A673 (cell line): ENCODE measurements at regions of chr11 and their contacts with region 1.

Region 1: DNA sequence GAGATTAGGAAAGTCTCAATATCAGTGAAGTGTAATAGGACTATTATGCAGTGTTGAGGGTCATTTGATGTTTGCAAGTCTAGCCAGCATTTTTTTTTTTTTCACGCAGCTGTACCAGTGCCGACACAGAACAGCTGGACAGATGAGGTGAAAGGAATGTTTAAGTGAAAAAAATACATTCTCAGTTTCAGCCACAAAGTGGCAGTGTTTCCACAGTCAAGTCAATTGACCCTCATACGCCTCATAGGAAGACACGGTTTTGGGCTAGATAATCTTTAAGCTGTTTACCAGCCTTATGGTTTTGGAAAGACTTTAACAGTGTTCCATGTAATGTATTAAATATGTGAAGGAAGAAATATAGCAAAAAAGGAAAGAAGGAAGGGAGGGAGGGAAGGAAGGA is 349.9 kb upstream of the ANO3 start:
- DNase-seq: peak; percentile 56
- H3K4me3 ChIP-seq: no peak overlapping the region
- H3K27ac ChIP-seq: no peak overlapping the region
- H3K4me1 ChIP-seq: no peaks in the 10 kb centered on the region
- H3K27me3 ChIP-seq: no peaks in the 10 kb centered on the region
- CTCF ChIP-seq: peak; percentile 60

Region 2: GRCh38 chr11:25970726-25971508 is 11.1 kb before region 1 on chr11:
- CTCF ChIA-PET with region 1: interaction called, 12 read pairs
- POLR2A ChIA-PET with region 1: no interaction called
- intact Hi-C with region 1: no loop called
- DNase-seq: no peak
- H3K4me3 ChIP-seq: no peak overlapping the region
- H3K27ac ChIP-seq: no peak overlapping the region
- H3K4me1 ChIP-seq: no peaks in the 10 kb centered on the region
- H3K27me3 ChIP-seq: no peaks in the 10 kb centered on the region
- CTCF ChIP-seq: 0 out of 2 replicates have a peak, but pooled peaks have one; percentile 8

Region 3: DNA sequence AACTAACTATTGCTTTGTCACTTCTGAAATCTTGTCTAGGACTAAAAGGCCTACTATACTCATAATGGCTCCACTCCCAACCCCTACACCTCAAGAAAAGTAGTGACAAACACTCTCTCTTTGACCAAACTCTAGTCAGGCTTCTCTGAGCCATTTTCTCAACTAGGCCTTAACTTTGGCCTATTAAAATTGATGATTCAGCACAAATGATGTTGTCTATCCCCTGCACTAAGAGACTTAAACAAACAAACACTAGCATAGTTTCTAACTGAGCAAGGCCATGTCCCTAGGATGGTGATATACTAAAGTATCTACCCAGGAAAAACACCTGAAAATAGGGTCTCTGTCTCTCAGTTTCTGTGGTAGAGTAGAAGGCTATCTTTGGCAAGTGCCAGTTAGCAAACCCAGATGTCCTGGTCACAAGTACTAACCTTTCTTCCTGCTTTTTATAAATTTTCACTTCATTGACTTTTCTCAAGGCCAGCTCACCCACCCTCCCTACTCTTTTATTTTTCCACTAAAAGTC is 130.3 kb after region 1 on chr11:
- CTCF ChIA-PET with region 1: no interaction called
- POLR2A ChIA-PET with region 1: no interaction called
- intact Hi-C with region 1: no loop called
- DNase-seq: no peak
- H3K4me3 ChIP-seq: no peak overlapping the region
- H3K27ac ChIP-seq: no peak overlapping the region
- H3K4me1 ChIP-seq: no peaks in the 10 kb centered on the region
- H3K27me3 ChIP-seq: no peaks in the 10 kb centered on the region
- CTCF ChIP-seq: no peak

Region 4: GRCh38 chr11:26134481-26135355 is 152.7 kb after region 1 on chr11:
- CTCF ChIA-PET with region 1: interaction called, 10 read pairs
- POLR2A ChIA-PET with region 1: no interaction called
- intact Hi-C with region 1: loop called (anchors 2 kb)
- DNase-seq: peak; percentile 23
- H3K4me3 ChIP-seq: no peak overlapping the region
- H3K27ac ChIP-seq: no peak overlapping the region
- H3K4me1 ChIP-seq: no peaks in the 10 kb centered on the region
- H3K27me3 ChIP-seq: no peaks in the 10 kb centered on the region
- CTCF ChIP-seq: peak; percentile 41

Region 5: DNA sequence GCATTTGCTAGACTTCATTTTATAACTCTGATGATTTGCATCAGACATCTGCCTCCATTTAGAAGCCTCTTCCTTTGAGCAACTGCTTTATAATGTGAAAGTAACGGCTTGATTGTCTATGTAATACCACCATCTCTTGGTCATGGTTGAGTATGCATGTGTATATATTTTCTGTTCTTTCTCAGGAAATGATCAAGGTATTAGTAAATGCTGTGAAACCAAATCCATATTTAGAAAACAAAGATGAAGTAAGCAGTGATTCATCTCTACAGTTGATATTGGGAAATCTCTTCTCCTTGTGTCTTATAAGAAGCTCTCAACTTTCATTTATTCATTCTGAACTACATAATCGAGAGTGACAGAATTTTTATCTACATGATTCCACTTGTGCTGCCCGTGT is 245.3 kb after region 1 on chr11:
- CTCF ChIA-PET with region 1: interaction called, 8 read pairs
- POLR2A ChIA-PET with region 1: no interaction called
- intact Hi-C with region 1: loop called (anchors 1 kb)
- DNase-seq: peak; percentile 62
- H3K4me3 ChIP-seq: no peak overlapping the region
- H3K27ac ChIP-seq: no peak overlapping the region
- H3K4me1 ChIP-seq: no peaks in the 10 kb centered on the region
- H3K27me3 ChIP-seq: no peaks in the 10 kb centered on the region
- CTCF ChIP-seq: peak; percentile 55

Region 6: DNA sequence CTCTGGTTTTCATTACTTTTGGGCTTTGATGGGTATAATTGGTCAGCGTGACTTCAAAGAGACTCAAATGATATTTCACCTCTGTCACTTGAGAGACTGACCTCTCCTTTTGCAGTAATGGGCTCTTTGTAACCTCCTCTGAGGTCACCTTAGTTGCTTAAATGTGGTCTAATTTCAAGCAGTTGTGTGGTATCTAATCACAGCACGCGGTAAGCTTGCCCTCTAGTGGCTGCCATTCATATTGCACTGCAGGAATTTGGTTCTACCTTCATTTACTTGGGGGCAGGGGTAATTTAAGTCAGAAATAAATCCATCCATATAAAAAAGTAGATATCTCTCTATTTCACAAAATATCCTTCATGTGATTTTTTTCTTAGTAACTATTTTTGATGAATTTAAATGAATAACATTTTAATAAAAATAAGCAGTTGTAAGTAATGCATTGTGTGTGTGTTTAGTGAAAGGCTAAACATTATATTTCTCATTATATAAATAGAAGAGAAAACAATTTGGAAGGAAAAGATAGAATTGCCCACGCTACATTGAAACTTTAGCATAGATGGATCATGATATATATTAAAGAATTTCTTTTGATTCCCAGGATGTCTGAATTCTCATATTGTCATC is 294.9 kb after region 1 on chr11:
- CTCF ChIA-PET with region 1: no interaction called
- POLR2A ChIA-PET with region 1: no interaction called
- intact Hi-C with region 1: loop called (anchors 1 kb)
- DNase-seq: peak; percentile 60
- H3K4me3 ChIP-seq: no peak overlapping the region
- H3K27ac ChIP-seq: no peak overlapping the region
- H3K4me1 ChIP-seq: no peaks in the 10 kb centered on the region
- H3K27me3 ChIP-seq: no peaks in the 10 kb centered on the region
- CTCF ChIP-seq: peak; percentile 87